ENCODE measurements at regions of chr18 and their contacts with region 1.

Region 1: DNA sequence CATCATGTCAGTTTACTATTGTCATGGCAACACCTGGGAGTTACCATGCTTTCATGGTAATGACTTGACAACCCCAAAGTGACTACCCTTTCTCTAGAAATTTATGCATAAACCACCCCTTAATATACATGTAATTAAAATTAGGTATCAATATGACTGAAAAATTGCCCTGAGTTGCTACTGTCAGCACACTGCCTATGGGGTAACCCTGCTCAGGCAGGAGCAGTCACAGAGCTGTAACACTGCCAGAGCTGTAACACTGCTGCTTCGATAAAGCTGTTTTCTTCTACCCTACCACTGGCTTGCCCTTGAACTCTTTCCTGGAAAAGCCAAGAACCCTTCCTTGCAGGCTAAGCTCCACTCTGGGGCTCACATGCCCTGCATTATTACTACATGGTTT is 95.5 kb upstream of the SYT4 start:
- DNase-seq: no peak
- ATAC-seq: no peak
- H3K4me3 ChIP-seq: no peak overlapping the region
- H3K4me3 Mint-ChIP-seq: no peak overlapping the region
- H3K27ac ChIP-seq: no peak overlapping the region
- H3K27ac Mint-ChIP-seq: no peak overlapping the region
- H3K4me1 ChIP-seq: no peaks in the 10 kb centered on the region
- H3K4me1 Mint-ChIP-seq: no peaks in the 10 kb centered on the region
- H3K27me3 ChIP-seq: no peaks in the 10 kb centered on the region
- H3K27me3 Mint-ChIP-seq: no peaks in the 10 kb centered on the region
- CTCF ChIP-seq: no peak

Region 2: GRCh38 chr18:43422518-43422917 is 49.7 kb after region 1 on chr18:
- intact Hi-C with region 1: loop called (anchors 5 kb)
- DNase-seq: no peak
- ATAC-seq: no peak
- H3K4me3 ChIP-seq: no peak overlapping the region
- H3K4me3 Mint-ChIP-seq: no peak overlapping the region
- H3K27ac ChIP-seq: no peak overlapping the region
- H3K27ac Mint-ChIP-seq: no peak overlapping the region
- H3K4me1 ChIP-seq: no peaks in the 10 kb centered on the region
- H3K4me1 Mint-ChIP-seq: no peaks in the 10 kb centered on the region
- H3K27me3 ChIP-seq: no peaks in the 10 kb centered on the region
- H3K27me3 Mint-ChIP-seq: no peaks in the 10 kb centered on the region
- CTCF ChIP-seq: no peak

Region 3: DNA sequence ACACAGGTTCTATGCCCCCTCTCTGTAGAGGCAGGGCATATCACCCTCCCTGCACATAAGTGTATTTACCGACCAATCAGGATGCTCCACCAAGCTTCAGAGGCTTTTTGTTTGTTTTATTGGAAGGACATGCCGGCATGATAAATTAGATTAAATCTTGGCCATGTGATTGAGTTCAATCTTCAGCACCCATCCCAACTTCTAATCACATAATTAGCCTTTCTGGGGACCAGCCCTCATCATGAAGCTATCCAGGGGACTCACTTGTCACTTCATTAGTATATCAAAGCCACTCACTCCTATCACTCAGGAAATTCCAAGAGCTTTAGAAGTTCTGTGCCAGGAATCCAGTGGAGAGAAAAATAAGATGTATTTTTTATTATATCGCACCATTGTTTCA is 63.1 kb after region 1 on chr18:
- intact Hi-C with region 1: no loop called
- DNase-seq: no peak
- ATAC-seq: no peak
- H3K4me3 ChIP-seq: no peak overlapping the region
- H3K4me3 Mint-ChIP-seq: no peak overlapping the region
- H3K27ac ChIP-seq: no peak overlapping the region
- H3K27ac Mint-ChIP-seq: no peak overlapping the region
- H3K4me1 ChIP-seq: no peaks in the 10 kb centered on the region
- H3K4me1 Mint-ChIP-seq: no peaks in the 10 kb centered on the region
- H3K27me3 ChIP-seq: no peaks in the 10 kb centered on the region
- H3K27me3 Mint-ChIP-seq: no peaks in the 10 kb centered on the region
- CTCF ChIP-seq: no peak

Measured in natural killer cell (primary cell).